ENCODE measurements at regions of chr20 and their contacts with region 1.

Region 1: DNA sequence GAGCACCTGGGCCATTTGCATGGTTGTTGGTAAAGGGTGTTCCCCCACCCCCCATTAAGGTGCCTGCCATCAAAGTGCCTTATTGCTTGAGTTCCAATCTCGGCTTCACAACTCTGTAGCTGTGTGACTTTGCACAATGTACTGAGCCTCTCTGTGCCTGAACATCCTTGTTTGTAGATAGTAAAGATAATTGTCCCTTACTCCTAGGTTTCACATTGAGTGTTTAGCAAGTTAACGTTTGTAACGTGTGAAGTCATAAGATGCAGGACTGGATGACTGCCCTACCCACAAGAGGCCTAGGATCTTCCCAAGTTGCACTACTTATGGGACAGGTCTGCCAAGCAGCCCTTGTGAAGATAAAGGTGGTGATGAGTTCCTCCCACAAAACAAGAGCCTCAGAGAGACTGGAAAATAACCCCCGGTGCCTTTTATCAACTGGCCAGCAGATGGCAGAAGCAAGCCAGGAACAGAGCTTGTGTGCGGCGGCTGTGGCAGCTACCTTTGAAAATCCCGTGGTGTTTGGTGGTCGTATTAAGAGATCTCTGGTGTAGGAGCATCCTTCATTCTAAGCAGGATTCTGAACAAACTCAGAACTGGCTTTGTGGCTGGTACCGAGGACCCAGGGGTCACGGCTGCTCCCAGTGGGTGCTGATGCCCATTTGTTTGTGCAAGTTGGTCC is 99.0 kb downstream of the CDH26 start:
- DNase-seq: peak; percentile 80
- H3K4me3 Mint-ChIP-seq: peak overlapping the region; percentile 79
- H3K27ac Mint-ChIP-seq: peak overlapping the region; percentile 86
- H3K4me1 Mint-ChIP-seq: peaks cover 40% of the 10 kb centered on the region
- H3K27me3 Mint-ChIP-seq: no peaks in the 10 kb centered on the region

Region 2: GRCh38 chr20:59802471-59803221 is 254.6 kb before region 1 on chr20:
- CTCF ChIA-PET with region 1: no interaction called
- POLR2A ChIA-PET with region 1: no interaction called
- intact Hi-C with region 1: no loop called
- DNase-seq: no peak
- H3K4me3 Mint-ChIP-seq: no peak overlapping the region
- H3K27ac Mint-ChIP-seq: no peak overlapping the region
- H3K4me1 Mint-ChIP-seq: no peaks in the 10 kb centered on the region
- H3K27me3 Mint-ChIP-seq: peaks cover 10% of the 10 kb centered on the region

Region 3: GRCh38 chr20:59948828-59949720 is 108.2 kb before region 1 on chr20:
- CTCF ChIA-PET with region 1: interaction called, 18 read pairs
- POLR2A ChIA-PET with region 1: no interaction called
- intact Hi-C with region 1: loop called (anchors 2 kb)
- DNase-seq: peak; percentile 27
- H3K4me3 Mint-ChIP-seq: no peak overlapping the region
- H3K27ac Mint-ChIP-seq: peak overlapping the region; percentile 83
- H3K4me1 Mint-ChIP-seq: peaks cover 26% of the 10 kb centered on the region
- H3K27me3 Mint-ChIP-seq: no peaks in the 10 kb centered on the region

Region 4: DNA sequence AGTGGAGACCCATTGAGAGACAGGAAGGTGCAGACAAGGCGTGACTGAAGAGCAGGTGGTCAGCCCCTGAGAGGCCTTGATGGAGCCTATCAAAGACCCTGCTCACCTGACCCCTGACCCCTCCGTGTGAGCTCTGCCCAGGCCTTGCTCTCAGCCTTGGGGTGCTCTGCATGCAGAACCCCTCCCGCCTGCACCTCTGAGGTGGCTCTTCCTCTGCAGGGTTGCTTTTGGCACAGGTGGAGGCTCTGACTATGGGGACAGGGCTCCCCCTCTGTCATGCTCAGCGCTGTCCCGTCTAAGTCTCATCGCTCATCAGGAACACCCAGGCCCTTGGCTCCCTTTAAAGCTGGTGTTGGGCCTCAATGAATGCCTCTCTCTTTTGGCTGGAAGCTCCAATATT is 22.1 kb after region 1 on chr20:
- CTCF ChIA-PET with region 1: interaction called, 11 read pairs
- POLR2A ChIA-PET with region 1: no interaction called
- intact Hi-C with region 1: no loop called
- DNase-seq: no peak
- H3K4me3 Mint-ChIP-seq: no peak overlapping the region
- H3K27ac Mint-ChIP-seq: no peak overlapping the region
- H3K4me1 Mint-ChIP-seq: peaks cover 3% of the 10 kb centered on the region
- H3K27me3 Mint-ChIP-seq: peaks cover 1% of the 10 kb centered on the region

Region 5: DNA sequence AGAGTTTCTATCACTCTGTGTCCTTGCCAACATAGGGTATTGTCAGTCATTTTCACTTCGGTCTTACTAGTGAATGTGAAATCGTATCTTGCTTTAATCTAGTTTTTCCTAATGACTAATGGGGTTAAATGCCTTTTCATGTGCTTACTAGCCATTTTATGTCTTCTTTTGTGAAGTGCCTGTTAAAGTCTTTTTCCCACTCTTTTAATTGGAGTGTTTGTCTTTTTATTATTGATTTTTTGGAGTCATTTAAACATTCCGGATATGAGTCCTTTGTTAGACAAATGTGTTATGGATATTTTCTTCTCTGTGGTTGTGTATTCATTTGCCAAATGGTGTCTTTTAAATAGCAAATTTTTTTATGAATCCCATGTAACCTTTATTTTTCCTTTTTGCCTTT is 95.5 kb after region 1 on chr20:
- CTCF ChIA-PET with region 1: no interaction called
- POLR2A ChIA-PET with region 1: no interaction called
- intact Hi-C with region 1: no loop called
- DNase-seq: no peak
- H3K4me3 Mint-ChIP-seq: no peak overlapping the region
- H3K27ac Mint-ChIP-seq: no peak overlapping the region
- H3K4me1 Mint-ChIP-seq: no peaks in the 10 kb centered on the region
- H3K27me3 Mint-ChIP-seq: peaks cover 2% of the 10 kb centered on the region

Region 6: DNA sequence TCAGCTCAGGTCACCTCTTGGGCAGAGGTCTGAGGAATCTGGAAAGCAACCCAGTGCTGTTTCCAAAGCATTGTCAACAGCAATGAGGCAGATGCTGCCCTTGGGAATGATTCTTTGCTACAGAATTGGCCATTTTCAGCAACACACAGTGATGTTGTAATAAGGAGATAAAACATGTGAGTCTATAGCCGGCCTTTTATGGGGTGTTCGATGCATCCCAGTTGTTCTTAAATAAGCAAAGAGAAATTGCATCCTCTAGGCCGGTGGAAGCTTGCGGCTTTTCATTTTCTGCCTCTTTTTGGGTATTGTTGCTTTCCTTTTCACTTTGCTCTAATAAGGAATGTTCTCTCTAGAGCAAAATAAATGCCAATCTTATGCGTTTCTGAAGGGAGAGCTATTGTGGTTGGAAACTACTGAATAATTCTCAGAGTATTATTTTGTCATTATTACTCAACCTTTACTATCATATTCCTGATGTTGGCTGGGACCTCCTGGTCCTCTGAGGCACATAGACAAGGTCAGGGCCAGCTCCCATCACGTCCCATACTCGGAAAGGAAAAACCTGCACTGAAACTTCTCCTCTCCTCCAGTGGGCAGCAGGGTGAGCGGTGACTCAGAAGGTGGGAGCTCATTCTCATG is 115.2 kb after region 1 on chr20:
- CTCF ChIA-PET with region 1: no interaction called
- POLR2A ChIA-PET with region 1: no interaction called
- intact Hi-C with region 1: no loop called
- DNase-seq: no peak
- H3K4me3 Mint-ChIP-seq: no peak overlapping the region
- H3K27ac Mint-ChIP-seq: no peak overlapping the region
- H3K4me1 Mint-ChIP-seq: no peaks in the 10 kb centered on the region
- H3K27me3 Mint-ChIP-seq: no peaks in the 10 kb centered on the region

Region 7: GRCh38 chr20:60210779-60211617 is 153.7 kb after region 1 on chr20:
- CTCF ChIA-PET with region 1: interaction called, 5 read pairs
- POLR2A ChIA-PET with region 1: no interaction called
- intact Hi-C with region 1: loop called (anchors 1 kb)
- DNase-seq: peak; percentile 72
- H3K4me3 Mint-ChIP-seq: no peak overlapping the region
- H3K27ac Mint-ChIP-seq: no peak overlapping the region
- H3K4me1 Mint-ChIP-seq: peaks cover 4% of the 10 kb centered on the region
- H3K27me3 Mint-ChIP-seq: no peaks in the 10 kb centered on the region

Region 8: DNA sequence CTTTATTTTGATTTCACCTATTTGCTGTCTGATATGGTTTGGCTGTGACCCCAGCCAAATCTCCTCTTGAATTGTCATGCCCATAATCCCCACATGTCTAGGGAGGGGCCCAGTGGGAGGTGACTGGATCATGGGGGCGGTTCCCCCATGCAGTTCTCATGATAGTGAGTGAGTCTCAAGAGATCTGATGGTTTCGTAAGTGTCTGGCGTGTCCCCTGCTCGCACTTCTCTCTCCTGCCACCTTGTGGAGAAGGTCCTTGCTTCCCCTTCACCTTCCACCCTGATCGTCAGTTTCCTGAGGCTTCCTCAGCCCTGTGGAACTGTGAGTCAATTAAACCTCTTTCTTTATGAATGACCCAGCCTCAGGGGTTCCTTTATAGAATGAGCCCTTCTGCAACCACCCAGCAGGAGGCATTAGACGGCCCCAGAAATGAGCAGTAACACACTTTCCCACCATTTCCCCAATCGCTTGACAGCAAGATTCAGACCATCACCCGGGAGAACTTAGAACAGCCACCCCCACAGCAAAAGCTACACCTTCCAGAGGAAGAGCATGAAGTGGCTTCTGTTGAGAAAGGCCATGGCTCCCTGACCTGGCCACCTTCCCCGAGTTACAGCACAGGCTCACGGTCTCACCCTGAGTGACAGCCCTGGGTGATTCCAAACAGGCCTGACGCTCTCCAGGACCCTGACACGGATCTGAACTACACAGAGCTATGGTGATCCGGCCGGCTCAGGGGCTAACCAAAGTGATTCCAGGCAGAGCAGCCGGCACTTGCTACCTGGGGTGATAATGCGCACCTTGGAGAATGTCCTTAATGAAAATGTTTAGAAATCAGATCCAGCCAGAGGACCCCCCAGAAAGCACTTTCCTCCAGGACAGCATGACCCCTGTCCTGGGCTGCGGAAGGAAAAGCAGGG is 1063.6 kb after region 1 on chr20:
- CTCF ChIA-PET with region 1: no interaction called
- POLR2A ChIA-PET with region 1: no interaction called
- intact Hi-C with region 1: loop called (anchors 2 kb)
- DNase-seq: peak; percentile 46
- H3K4me3 Mint-ChIP-seq: no peak overlapping the region
- H3K27ac Mint-ChIP-seq: no peak overlapping the region
- H3K4me1 Mint-ChIP-seq: no peaks in the 10 kb centered on the region
- H3K27me3 Mint-ChIP-seq: no peaks in the 10 kb centered on the region

Measured in activated CD4-positive, alpha-beta memory T cell treated with anti-CD3 and anti-CD28 coated beads for 36 hours (primary cell).